Activated naive CD4-positive, alpha-beta T cell treated with anti-CD3 and anti-CD28 coated beads for 36 hours (primary cell): ENCODE measurements at regions of chr3 and their contacts with region 1.

Region 1: GRCh38 chr3:196739671-196740480 is at the start of gene PAK2:
- DNase-seq: peak; percentile 90
- H3K4me3 Mint-ChIP-seq: peak within 1 kb of the TSS; percentile 100
- H3K27ac Mint-ChIP-seq: peak within 1 kb of the TSS; percentile 98
- H3K4me1 Mint-ChIP-seq: peaks cover 18% of the 10 kb centered on the region
- H3K27me3 Mint-ChIP-seq: no peaks in the 10 kb centered on the region
- total RNA-seq, gene PAK2: 66.6 to 68.4 TPM

Region 2: DNA sequence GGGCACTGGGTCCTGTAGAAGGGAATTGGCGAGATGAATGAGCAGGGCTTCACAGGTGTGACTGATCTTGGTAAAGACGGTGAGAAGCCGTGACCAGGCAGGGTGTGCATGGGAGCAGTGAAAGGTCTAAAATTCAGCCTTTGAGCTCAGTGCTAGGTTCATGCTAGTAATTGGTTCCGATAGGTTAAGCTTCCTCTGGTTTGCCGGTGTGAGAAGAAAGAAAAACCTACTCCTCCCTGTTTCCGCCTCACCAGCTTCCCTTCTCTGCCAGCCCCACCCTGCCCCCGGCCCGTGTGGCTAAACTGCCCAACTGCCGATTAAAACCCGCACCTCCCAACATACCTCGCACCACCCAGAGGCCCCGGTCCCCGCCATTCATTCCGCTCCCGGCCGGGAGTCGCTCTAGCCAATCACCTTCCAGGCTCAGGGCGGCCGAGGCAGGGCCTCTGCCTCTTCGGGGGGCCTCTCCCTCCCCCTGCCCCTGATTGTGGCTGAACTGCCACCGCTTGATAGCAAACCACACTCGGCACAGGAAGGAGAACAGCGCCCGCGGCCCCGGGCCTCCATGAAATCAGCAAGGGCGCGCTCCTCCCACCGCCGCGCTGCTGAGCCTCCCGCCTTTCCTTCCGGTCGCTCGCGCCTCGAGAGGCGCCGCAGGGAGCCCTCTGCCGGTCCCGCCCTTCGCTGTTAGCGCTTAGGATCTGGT is 107.7 kb before region 1 on chr3:
- CTCF ChIA-PET with region 1: no interaction called
- intact Hi-C with region 1: loop called (anchors 1 kb)
- DNase-seq: peak; percentile 90
- H3K4me3 Mint-ChIP-seq: peak overlapping the region; percentile 88
- H3K27ac Mint-ChIP-seq: peak overlapping the region; percentile 97
- H3K4me1 Mint-ChIP-seq: peaks cover 48% of the 10 kb centered on the region
- H3K27me3 Mint-ChIP-seq: no peaks in the 10 kb centered on the region

Region 3: DNA sequence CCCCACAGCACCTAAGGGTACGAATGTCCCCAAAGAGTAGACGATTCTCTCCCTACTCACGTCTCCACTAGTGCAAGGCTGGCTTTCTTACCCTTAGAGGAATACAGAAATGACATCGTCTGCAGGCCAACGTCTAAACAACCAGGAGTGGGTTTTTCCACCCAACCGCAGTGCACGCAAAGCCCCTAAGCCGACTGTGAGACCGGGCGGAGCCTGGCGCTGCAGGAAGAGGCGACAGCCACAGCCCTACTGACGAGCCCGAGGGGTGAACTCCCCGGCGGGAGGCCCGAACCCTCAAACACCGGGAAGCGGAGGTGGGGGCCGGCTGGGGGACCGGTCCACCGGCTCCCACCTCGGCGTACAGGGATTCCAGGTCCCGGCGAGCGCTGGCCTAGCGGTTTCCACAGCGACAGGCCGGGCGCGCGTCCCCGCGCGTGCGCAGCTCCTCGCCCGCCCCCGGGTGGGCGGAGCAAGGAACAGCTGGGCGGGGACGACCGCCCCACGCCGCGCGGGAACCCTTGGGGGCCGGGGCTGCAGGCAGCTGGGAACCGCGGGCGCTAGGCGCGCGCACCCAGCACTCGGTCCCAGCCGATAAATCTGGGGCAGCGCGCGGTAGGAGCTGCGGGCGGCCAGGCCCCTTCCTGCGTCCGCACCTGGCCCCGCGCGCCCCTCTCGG is 27.9 kb before region 1 on chr3 and contains the starts of genes CEP19 and PIGX:
- CTCF ChIA-PET with region 1: interaction called, 5 read pairs
- intact Hi-C with region 1: loop called (anchors 1 kb)
- DNase-seq: peak; percentile 94
- H3K4me3 Mint-ChIP-seq: peak within 1 kb of the TSS; percentile 83
- H3K27ac Mint-ChIP-seq: peak within 1 kb of the TSS; percentile 92
- H3K4me1 Mint-ChIP-seq: peaks cover 34% of the 10 kb centered on the region
- H3K27me3 Mint-ChIP-seq: no peaks in the 10 kb centered on the region
- total RNA-seq, gene CEP19: 3.1 to 4.4 TPM
- total RNA-seq, gene PIGX: 30.7 to 32.8 TPM

Region 4: DNA sequence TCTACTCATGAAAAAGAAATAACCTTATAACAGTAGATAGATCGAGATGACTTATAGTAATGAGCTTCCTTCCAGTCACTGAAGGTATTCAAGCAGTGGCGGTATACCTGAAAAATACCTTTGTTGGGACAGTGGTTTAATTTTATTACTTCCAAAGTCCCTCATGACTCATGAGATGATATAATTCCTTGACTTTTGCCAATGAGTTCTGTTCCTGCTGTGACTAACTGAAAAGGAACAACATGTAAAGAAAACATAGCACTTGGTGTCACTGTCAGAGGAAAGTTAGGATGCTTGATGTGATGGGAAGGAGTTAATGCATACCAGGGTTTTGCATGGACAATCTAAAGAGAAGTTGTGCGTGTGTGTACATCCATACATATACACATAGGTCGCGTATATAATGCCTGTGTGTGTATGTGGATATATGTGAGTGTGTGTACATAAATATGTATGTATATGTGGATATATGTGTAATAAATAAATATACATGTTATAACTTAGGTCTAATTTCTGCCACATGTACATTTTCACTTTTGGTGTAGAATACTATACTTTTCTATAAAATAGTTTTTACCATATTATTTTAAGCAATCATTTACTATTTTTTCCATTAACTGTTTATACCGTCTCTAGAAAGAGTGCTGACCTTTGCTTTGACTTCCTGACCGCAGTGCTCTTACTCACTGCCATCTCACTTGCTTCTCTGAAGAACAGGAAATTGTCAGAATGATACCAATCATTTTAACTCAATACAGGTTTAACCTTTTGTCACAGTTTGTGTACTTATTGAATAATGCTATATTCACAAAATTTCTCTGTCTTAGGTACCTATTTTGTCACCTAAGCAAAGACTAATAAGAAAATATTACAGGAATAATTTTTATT is 12.8 kb before region 1 on chr3:
- CTCF ChIA-PET with region 1: no interaction called
- intact Hi-C with region 1: loop called (anchors 1 kb)
- DNase-seq: peak; percentile 53
- H3K4me3 Mint-ChIP-seq: no peak overlapping the region
- H3K27ac Mint-ChIP-seq: peak overlapping the region; percentile 4
- H3K4me1 Mint-ChIP-seq: peaks cover 17% of the 10 kb centered on the region
- H3K27me3 Mint-ChIP-seq: no peaks in the 10 kb centered on the region

Region 5: GRCh38 chr3:196757876-196758739 is 18.2 kb after region 1 on chr3:
- CTCF ChIA-PET with region 1: interaction called, 7 read pairs
- intact Hi-C with region 1: loop called (anchors 2 kb)
- DNase-seq: peak; percentile 14
- H3K4me3 Mint-ChIP-seq: no peak overlapping the region
- H3K27ac Mint-ChIP-seq: peak overlapping the region; percentile 48
- H3K4me1 Mint-ChIP-seq: peaks cover 44% of the 10 kb centered on the region
- H3K27me3 Mint-ChIP-seq: no peaks in the 10 kb centered on the region

Region 6: DNA sequence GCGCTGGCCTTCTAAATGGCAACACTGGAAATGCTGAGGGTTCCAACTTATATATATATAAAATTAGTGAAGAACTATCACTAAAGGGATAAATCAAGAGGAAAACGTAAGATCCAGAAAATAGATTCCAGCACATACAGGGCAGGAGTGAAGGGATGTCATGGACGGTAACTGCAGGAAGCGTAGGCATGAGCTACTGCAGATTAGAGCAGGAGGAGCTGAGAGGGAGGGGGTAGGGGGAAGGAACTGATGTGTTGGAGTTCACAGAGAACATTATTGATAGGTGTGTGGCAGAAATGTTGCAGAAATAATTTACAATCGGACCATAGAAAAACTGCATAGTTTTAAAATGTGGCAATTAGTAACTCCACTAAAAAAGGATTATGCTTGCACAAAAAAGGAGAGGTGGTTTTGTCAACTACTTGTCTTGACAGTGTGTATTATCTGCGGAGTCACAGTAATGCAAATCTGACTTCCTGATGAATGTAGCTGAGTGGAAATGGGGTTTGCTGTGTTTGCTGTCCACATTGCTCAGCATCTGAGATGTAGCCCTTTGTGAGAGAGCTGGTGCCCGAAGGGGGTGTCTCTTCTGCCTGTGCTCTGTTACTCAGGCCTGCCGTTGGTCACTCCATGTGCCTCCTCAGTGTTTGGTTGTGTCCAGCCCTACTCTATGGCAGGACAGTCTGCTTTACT is 61.0 kb after region 1 on chr3:
- CTCF ChIA-PET with region 1: interaction called, 3 read pairs
- intact Hi-C with region 1: loop called (anchors 1 kb)
- DNase-seq: no peak
- H3K4me3 Mint-ChIP-seq: no peak overlapping the region
- H3K27ac Mint-ChIP-seq: no peak overlapping the region
- H3K4me1 Mint-ChIP-seq: peaks cover 17% of the 10 kb centered on the region
- H3K27me3 Mint-ChIP-seq: no peaks in the 10 kb centered on the region

Region 7: GRCh38 chr3:196962108-196962929 is 222.4 kb after region 1 on chr3:
- CTCF ChIA-PET with region 1: no interaction called
- intact Hi-C with region 1: no loop called
- DNase-seq: no peak
- H3K4me3 Mint-ChIP-seq: no peak overlapping the region
- H3K27ac Mint-ChIP-seq: no peak overlapping the region
- H3K4me1 Mint-ChIP-seq: no peaks in the 10 kb centered on the region
- H3K27me3 Mint-ChIP-seq: peaks cover 3% of the 10 kb centered on the region